Naive thymus-derived CD4-positive, alpha-beta T cell (primary cell): ENCODE measurements at regions of chr18 and their contacts with region 1.

Region 1: GRCh38 chr18:77000527-77000926 is 132.1 kb downstream of the MBP start:
- DNase-seq: peak in 7 of 9 donors; percentile 29 to 64 (median 50)
- ATAC-seq: peak; percentile 68
- H3K4me3 ChIP-seq: no peak overlapping the region
- H3K4me3 Mint-ChIP-seq: no peak overlapping the region
- H3K27ac ChIP-seq: no peak overlapping the region
- H3K27ac Mint-ChIP-seq: peak overlapping the region in 2 of 9 donors; percentile 11 to 41
- H3K4me1 ChIP-seq: peaks cover 7 to 10% of the 10 kb centered on the region in 2 donors
- H3K4me1 Mint-ChIP-seq: peaks cover 13 to 30% (median 28%) of the 10 kb centered on the region in 7 donors
- H3K27me3 ChIP-seq: no peaks in the 10 kb centered on the region
- H3K27me3 Mint-ChIP-seq: peaks cover 0 to 4% (median 0%) of the 10 kb centered on the region in 5 donors

Region 2: GRCh38 chr18:77039196-77040130 is 38.9 kb after region 1 on chr18:
- CTCF ChIA-PET with region 1: no interaction called
- POLR2A ChIA-PET with region 1: no interaction called
- intact Hi-C with region 1: no loop called
- DNase-seq: no peak
- ATAC-seq: peak; percentile 47
- H3K4me3 ChIP-seq: no peak overlapping the region
- H3K4me3 Mint-ChIP-seq: peak overlapping the region in 1 of 10 donors; percentile 6
- H3K27ac ChIP-seq: no peak overlapping the region
- H3K27ac Mint-ChIP-seq: peak overlapping the region; percentile 10 to 79 (median 39)
- H3K4me1 ChIP-seq: peaks cover 11 to 17% of the 10 kb centered on the region in 2 donors
- H3K4me1 Mint-ChIP-seq: peaks cover 33 to 66% (median 54%) of the 10 kb centered on the region in 7 donors
- H3K27me3 ChIP-seq: no peaks in the 10 kb centered on the region
- H3K27me3 Mint-ChIP-seq: no peaks in the 10 kb centered on the region

Region 3: DNA sequence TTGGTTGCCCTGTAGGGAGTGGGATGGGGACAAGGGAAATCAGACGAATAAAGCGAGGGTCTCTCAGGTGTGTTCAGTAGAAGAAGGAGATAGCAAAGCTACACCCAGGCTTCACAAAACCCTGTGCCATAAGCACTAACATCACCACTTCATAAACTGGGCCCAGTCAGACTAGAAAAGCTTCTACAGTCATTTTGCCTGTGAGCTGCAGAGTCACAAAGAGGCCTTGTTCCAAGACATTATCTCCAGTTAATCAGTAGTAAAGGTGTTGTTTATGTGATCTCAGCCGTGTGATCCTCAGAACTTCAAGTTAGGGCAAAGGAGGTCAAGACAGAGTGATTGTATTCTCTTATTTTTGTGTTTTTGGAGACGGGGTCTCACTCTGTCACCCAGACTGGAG is 397.1 kb after region 1 on chr18:
- CTCF ChIA-PET with region 1: no interaction called
- POLR2A ChIA-PET with region 1: no interaction called
- intact Hi-C with region 1: loop called in 1 of 2 experiments (anchors 5 kb)
- DNase-seq: no peak
- ATAC-seq: no peak
- H3K4me3 ChIP-seq: no peak overlapping the region
- H3K4me3 Mint-ChIP-seq: no peak overlapping the region
- H3K27ac ChIP-seq: no peak overlapping the region
- H3K27ac Mint-ChIP-seq: no peak overlapping the region
- H3K4me1 ChIP-seq: no peaks in the 10 kb centered on the region
- H3K4me1 Mint-ChIP-seq: no peaks in the 10 kb centered on the region
- H3K27me3 ChIP-seq: no peaks in the 10 kb centered on the region
- H3K27me3 Mint-ChIP-seq: peaks cover 0 to 9% (median 3%) of the 10 kb centered on the region in 5 donors

Region 4: GRCh38 chr18:77470569-77471413 is 470.3 kb after region 1 on chr18:
- CTCF ChIA-PET with region 1: no interaction called
- POLR2A ChIA-PET with region 1: no interaction called
- intact Hi-C with region 1: loop called in 1 of 2 experiments (anchors 5 kb)
- DNase-seq: no peak
- ATAC-seq: no peak
- H3K4me3 ChIP-seq: no peak overlapping the region
- H3K4me3 Mint-ChIP-seq: no peak overlapping the region
- H3K27ac ChIP-seq: no peak overlapping the region
- H3K27ac Mint-ChIP-seq: no peak overlapping the region
- H3K4me1 ChIP-seq: no peaks in the 10 kb centered on the region
- H3K4me1 Mint-ChIP-seq: no peaks in the 10 kb centered on the region
- H3K27me3 ChIP-seq: no peaks in the 10 kb centered on the region
- H3K27me3 Mint-ChIP-seq: peaks cover 13 to 36% (median 31%) of the 10 kb centered on the region in 5 donors